ENCODE measurements at regions of chr14 and their contacts with region 1.

Region 1: DNA sequence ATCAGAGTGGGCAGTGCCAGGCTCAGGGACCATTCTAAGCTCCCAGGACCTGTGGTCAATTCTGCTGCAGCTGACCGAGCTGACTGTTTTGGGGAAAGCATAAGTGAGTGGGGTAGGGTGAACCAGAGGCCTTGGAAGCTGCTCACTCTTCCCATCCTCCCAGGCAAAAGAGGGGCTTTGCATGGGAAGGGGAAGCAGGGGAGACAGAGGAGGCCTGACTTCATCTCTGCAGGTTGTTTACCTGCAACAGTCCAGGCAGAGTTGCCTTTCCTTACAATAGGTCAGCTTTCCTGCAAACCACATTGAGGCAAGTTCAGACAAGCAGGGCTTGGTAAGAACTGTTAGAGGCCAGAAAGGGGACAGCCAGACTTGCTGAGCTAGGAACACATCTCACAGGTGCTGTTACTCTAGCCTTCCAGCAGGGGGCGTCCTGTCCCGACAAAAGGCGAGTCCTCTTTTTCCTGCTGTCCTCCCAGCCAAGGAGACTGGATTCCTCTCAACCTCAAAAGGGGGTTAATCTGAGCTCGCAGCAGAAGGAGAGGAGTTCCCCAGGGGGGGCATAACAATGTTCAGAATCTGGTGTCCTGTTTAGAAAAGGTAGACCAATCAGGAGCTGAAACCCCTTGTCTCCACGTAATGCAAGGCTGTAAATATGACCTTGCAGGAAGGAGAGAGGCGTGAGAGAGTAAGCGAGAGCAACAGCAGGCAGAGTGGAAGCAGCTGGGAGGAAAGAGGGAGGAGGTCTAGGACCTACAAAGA is 4.3 kb upstream of the DHRS2 start:
- DNase-seq: peak; percentile 74
- ATAC-seq: peak; percentile 82
- H3K4me3 Mint-ChIP-seq: peak overlapping the region; percentile 11
- H3K27ac Mint-ChIP-seq: peak overlapping the region; percentile 48
- H3K4me1 Mint-ChIP-seq: peaks cover 11% of the 10 kb centered on the region
- H3K27me3 Mint-ChIP-seq: peaks cover 11% of the 10 kb centered on the region

Region 2: DNA sequence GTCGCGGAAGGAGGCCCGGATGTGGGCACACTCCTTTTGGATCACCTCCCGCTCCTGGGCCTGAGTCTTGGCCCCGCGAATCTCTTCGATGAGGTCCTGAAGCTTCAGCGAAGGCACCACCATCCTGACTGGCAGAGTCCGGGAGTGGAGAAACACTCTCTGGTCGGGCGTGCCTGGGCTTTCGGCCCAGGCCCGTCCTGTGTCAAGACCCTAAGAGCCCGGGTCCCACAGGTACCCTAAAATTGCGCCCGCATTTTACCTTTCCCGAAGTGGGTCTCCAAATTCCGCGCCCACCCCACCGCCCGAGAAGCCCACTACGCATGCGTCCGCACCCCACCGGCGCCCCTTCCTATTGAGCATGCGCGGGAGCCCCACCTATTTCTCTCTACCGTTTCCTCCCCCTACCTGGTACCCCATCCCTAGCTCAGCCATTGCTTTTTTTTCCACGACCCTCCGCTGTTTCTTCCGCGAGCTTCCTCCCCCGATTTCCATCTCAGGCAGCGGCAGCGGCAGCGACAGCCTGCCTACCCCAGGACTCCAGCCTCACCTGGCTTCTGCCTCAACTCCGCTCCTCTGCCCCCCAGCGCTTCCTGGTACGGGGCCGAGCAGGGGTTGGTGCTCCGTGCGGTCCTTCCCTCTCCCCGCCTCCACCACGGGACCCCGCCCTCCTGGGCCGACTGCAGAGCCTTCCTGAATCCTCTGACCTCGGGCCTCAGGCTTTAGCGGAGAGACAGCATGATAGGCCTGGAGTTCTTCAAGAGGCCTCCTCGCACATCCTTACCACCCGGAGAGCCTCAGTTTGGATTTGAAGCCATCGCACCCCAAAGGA is 64.5 kb before region 1 on chr14 and contains the start of gene AP1G2:
- CTCF ChIA-PET with region 1: interaction called, 15 read pairs
- POLR2A ChIA-PET with region 1: no interaction called
- DNase-seq: peak; percentile 92
- ATAC-seq: peak; percentile 97
- H3K4me3 Mint-ChIP-seq: peak within 1 kb of the TSS; percentile 100
- H3K27ac Mint-ChIP-seq: peak within 1 kb of the TSS; percentile 99
- H3K4me1 Mint-ChIP-seq: peaks cover 50% of the 10 kb centered on the region
- H3K27me3 Mint-ChIP-seq: peaks cover 5% of the 10 kb centered on the region
- total RNA-seq, gene AP1G2: 267 to 276 TPM

Region 3: GRCh38 chr14:23588884-23589598 is 42.8 kb before region 1 on chr14:
- CTCF ChIA-PET with region 1: interaction called, 110 read pairs
- POLR2A ChIA-PET with region 1: interaction called, 3 read pairs
- DNase-seq: peak; percentile 88
- ATAC-seq: peak; percentile 99
- H3K4me3 Mint-ChIP-seq: no peak overlapping the region
- H3K27ac Mint-ChIP-seq: no peak overlapping the region
- H3K4me1 Mint-ChIP-seq: peaks cover 11% of the 10 kb centered on the region
- H3K27me3 Mint-ChIP-seq: peaks cover 11% of the 10 kb centered on the region

Region 4: DNA sequence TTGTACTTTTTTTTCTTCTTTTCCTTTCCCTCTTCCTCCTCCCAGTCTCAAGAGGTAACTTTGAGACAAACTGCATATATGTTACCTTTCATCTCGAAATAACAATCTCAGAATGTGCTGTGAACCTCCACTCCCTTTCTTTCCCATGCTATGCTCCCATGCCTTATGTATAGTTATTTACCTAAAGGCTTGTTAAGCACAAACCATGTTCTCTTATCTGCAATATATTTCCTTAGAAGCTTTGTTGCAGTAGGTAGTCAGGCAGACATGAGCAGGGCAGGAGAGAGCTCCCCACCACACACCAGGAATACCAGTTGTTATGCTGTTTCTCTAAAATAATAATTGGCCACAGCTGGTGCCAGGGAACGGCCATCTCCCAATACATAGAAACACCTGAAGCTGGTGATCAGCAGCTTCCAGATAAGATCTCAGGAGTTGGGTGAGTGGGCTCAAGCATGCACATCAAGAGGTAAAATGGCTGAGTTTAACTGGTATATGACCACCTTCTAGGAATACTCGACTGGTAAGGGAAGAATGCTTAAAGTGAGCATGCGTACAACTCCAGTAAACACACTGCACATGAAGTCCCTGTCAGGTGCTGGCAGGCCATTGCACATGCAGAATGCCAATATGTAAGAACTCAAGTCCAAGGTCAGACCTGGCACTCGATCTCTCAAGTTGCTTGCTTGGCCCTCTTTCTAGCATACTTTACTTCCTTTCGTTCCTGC is 10.5 kb before region 1 on chr14:
- CTCF ChIA-PET with region 1: interaction called, 197 read pairs
- POLR2A ChIA-PET with region 1: no interaction called
- DNase-seq: no peak
- ATAC-seq: no peak
- H3K4me3 Mint-ChIP-seq: no peak overlapping the region
- H3K27ac Mint-ChIP-seq: no peak overlapping the region
- H3K4me1 Mint-ChIP-seq: peaks cover 3% of the 10 kb centered on the region
- H3K27me3 Mint-ChIP-seq: peaks cover 5% of the 10 kb centered on the region

Region 5: GRCh38 chr14:23660290-23661226 is 28.7 kb after region 1 on chr14:
- CTCF ChIA-PET with region 1: interaction called, 34 read pairs
- POLR2A ChIA-PET with region 1: no interaction called
- DNase-seq: peak; percentile 41
- ATAC-seq: peak; percentile 79
- H3K4me3 Mint-ChIP-seq: no peak overlapping the region
- H3K27ac Mint-ChIP-seq: no peak overlapping the region
- H3K4me1 Mint-ChIP-seq: peaks cover 7% of the 10 kb centered on the region
- H3K27me3 Mint-ChIP-seq: peaks cover 2% of the 10 kb centered on the region

Region 6: DNA sequence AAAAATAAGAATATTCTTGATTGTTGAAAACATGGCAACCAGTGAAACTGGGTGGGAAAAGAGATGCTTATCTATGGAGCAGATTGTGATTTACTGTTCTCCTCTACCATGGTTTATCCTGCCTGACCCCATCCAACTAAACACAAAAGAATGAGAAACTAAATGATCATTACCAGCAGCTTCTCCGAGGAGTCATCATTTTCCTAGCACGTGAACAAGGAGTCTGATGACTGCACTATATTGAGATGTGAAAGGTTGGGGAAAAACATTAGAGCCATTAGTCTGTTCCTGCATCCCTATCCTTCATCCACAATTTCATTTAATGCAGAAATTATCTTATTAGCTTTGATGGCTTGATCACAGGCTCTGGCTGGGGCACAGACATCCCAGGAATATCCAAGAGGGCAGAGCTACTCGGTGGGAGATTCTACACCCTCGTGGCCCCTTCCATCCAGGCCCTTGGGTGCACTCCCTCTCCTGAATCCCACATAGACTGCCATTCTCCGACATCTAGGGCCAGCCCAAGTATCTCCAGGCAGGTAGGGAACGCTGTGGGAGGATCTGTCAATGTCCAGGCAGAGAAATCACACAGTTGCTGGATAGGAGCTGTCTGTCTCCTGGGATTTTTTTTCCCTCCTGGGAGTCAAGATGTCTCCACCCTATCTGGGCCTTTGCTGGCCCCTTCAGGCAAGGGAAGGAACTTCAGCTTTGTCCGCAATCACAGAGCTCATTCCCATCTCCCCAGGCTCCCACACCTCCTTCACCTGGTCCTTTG is 278.4 kb after region 1 on chr14:
- CTCF ChIA-PET with region 1: interaction called, 19 read pairs
- POLR2A ChIA-PET with region 1: no interaction called
- DNase-seq: peak; percentile 30
- ATAC-seq: peak; percentile 33
- H3K4me3 Mint-ChIP-seq: no peak overlapping the region
- H3K27ac Mint-ChIP-seq: no peak overlapping the region
- H3K4me1 Mint-ChIP-seq: no peaks in the 10 kb centered on the region
- H3K27me3 Mint-ChIP-seq: peaks cover 19% of the 10 kb centered on the region

Region 7: GRCh38 chr14:23929822-23930294 is 298.0 kb after region 1 on chr14:
- CTCF ChIA-PET with region 1: interaction called, 30 read pairs
- POLR2A ChIA-PET with region 1: no interaction called
- DNase-seq: peak; percentile 90
- ATAC-seq: peak; percentile 88
- H3K4me3 Mint-ChIP-seq: no peak overlapping the region
- H3K27ac Mint-ChIP-seq: no peak overlapping the region
- H3K4me1 Mint-ChIP-seq: no peaks in the 10 kb centered on the region
- H3K27me3 Mint-ChIP-seq: peaks cover 4% of the 10 kb centered on the region